K562 (cell line): ENCODE measurements at regions of chr6 and their contacts with region 1.

Region 1: DNA sequence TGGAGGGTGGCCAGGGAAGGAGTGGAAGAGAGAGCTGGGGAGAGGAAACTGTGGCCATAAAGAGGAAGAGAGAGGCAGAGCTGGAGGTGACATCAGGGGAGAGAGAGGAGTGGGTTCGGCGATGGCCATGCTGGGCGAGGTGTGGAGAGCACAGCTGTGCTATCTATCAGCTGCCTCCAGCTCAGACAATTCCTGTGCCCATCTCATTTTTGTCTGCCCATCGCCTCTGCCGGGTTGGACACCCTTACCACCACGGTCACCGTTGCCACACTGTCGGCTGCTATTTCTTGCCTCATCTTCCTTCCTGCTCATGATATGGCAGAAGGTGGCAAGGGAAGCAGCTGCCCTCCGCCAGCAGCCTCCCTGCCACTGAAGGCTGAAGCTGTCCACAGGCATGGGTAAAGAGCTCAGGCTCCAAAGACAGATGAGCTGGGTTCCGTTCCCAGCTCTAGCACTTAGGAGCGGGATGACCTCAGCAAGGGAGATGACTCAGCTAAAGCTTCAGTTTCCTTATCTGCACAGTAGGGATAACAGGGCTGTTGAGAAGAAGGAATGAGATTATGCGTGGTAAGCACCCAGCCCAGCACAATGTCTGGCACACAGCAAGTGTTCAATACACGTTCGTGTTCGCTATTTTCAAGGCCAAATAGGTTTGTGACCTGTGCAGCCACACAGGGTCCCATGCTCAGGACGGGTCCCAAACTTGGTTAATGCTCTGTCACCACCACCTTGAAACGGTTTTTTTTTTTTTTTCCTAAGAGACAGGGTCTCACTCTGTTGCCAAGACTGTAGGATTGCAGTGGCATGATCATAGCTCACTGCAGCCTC is 21.9 kb upstream of the TAF8 start:
- DNase-seq: peak; percentile 92 to 98 (median 94)
- ATAC-seq: peak; percentile 87
- H3K4me3 ChIP-seq: peak overlapping the region; percentile 29
- H3K27ac ChIP-seq: peak overlapping the region; percentile 98
- H3K4me1 ChIP-seq: peaks cover 69 to 77% of the 10 kb centered on the region in 2 experiments
- H3K27me3 ChIP-seq: no peaks in the 10 kb centered on the region
- CTCF ChIP-seq: no peak
- EP300 ChIP-seq: peak; percentile 96
- POLR2A ChIP-seq: peak; percentile 90
- RAD21 ChIP-seq: peak; percentile 6 to 37; a peak in 2 of 4 replicates

Region 2: DNA sequence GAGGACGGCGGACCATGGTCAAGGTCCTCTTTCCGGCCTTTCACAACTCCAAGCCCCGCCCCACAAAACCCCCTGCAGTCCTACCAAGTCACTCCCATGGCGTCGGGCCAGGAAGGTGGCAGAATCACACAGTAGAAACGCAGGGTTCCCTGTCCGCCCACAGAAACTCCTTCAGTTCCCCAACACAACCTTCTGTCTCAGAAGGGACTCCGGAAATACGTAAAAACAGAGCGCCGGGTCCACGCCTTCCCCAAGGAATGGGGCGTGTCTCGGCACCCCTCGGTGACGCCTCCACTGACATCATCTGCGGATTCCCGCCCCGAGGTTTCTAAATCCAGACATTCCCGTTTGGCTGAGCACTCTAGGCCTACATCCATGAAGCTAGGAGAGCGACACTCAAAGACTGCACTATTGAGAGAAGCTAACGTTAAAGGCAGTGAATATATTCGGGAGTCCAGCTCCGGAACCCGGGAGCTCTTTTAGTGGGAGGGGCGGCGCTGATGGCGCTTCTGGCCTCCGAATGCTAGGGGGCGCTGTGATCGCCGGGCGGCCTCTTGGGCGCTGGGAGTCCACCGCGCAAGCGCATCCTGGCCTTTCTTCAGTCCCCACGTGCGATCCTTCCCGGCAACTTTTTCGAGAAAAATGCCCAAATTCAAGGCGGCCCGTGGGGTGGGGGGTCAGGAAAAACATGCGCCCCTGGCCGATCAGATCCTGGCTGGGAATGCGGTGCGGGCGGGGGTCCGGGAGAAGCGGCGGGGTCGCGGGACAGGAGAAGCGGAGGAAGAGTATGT is 107.3 kb before region 1 on chr6 and contains the starts of genes BYSL and MED20:
- CTCF ChIA-PET with region 1: no interaction called
- POLR2A ChIA-PET with region 1: interaction called, 12 read pairs
- in situ Hi-C with region 1: no loop called
- intact Hi-C with region 1: no loop called
- DNase-seq: peak; percentile 95 to 98 (median 96)
- ATAC-seq: peak; percentile 89
- H3K4me3 ChIP-seq: peak within 1 kb of the TSS; percentile 82
- H3K27ac ChIP-seq: peak within 1 kb of the TSS; percentile 98
- H3K4me1 ChIP-seq: peaks cover 14 to 16% of the 10 kb centered on the region in 2 experiments; a peak in 4 of 5 replicates
- H3K27me3 ChIP-seq: no peaks in the 10 kb centered on the region
- CTCF ChIP-seq: peak; percentile 91 to 99 (median 98)
- EP300 ChIP-seq: peak; percentile 43; the same call in 1 of the 2 replicates
- POLR2A ChIP-seq: peak; percentile 88
- RAD21 ChIP-seq: peak in 1 of 2 experiments; percentile 20; a peak in 3 of 4 replicates
- polyA plus RNA-seq, gene BYSL: 22.2 to 25.8 TPM
- polyA plus RNA-seq, gene MED20: 63.8 to 80.9 TPM

Region 3: GRCh38 chr6:41941280-41942066 is 87.0 kb before region 1 on chr6 and contains the start of gene CCND3:
- CTCF ChIA-PET with region 1: interaction called, 3 read pairs
- POLR2A ChIA-PET with region 1: interaction called, 14 read pairs
- in situ Hi-C with region 1: no loop called
- intact Hi-C with region 1: loop called (anchors 2 kb)
- DNase-seq: peak; percentile 92 to 98 (median 94)
- ATAC-seq: peak; percentile 84
- H3K4me3 ChIP-seq: peak within 1 kb of the TSS; percentile 81
- H3K27ac ChIP-seq: peak within 1 kb of the TSS; percentile 72
- H3K4me1 ChIP-seq: peaks cover 40 to 55% of the 10 kb centered on the region in 2 experiments
- H3K27me3 ChIP-seq: no peaks in the 10 kb centered on the region
- CTCF ChIP-seq: peak in 2 of 3 experiments; percentile 6 to 12; a peak in 1 of 6 replicates
- EP300 ChIP-seq: 0 out of 2 replicates have a peak, but pooled peaks have one; percentile 8
- POLR2A ChIP-seq: peak; percentile 70
- RAD21 ChIP-seq: no peak
- polyA plus RNA-seq, gene CCND3: 21.5 to 24.7 TPM

Region 4: DNA sequence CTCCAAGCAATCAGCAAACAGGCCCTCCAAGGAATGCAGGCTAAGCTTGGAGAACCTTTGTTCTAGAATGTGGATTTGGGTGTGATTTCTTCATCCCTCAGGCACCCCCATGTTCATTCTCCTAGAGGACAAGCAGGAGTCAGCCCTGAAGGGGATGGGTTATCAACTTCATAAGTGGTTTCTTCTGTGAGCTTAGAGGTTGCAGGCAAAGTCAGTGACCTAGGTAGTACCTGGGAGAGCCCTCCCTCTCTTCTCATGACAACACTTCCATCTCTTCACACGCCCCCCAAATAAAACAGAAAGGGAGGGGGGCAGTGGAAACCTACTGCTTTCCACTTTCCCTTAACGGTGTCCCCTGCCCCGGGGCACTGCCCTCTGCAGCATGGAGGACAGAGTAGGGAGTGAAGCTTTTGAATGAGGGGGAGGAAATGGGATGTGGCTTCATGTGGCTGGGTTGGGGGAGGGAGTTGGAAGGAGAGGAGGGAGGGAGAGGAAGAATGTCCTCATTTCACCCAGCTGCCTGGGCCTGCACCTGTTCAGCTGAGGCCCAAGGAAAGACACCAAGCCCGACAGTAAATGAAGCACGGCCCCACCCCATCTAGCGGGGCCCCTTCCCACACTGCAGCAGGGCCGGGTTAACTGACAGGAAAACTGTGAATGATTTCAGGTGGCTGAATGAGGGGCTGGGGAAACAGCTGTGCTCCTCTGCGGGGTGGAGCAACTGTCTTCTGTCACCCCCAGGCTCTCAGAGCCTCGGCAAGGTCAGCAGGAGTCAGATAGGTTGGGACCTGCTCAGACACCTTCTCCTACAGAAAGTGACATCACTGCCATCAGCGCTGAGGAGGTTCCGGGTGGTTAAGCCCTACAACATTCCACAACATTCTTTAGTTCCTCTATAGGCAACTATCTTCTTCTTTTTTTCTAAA is 18.2 kb before region 1 on chr6:
- CTCF ChIA-PET with region 1: no interaction called
- POLR2A ChIA-PET with region 1: interaction called, 52 read pairs
- in situ Hi-C with region 1: no loop called
- intact Hi-C with region 1: no loop called
- DNase-seq: peak; percentile 74 to 79 (median 75)
- ATAC-seq: peak; percentile 90
- H3K4me3 ChIP-seq: no peak overlapping the region
- H3K27ac ChIP-seq: peak overlapping the region; percentile 15; the same call in 1 of the 3 replicates
- H3K4me1 ChIP-seq: peaks cover 18 to 43% of the 10 kb centered on the region in 2 experiments
- H3K27me3 ChIP-seq: no peaks in the 10 kb centered on the region
- CTCF ChIP-seq: peak in 1 of 3 experiments; percentile 19; a peak in 2 of 6 replicates
- EP300 ChIP-seq: peak; percentile 44; the same call in 1 of the 2 replicates
- POLR2A ChIP-seq: 0 out of 2 replicates have a peak, but pooled peaks have one; percentile 18
- RAD21 ChIP-seq: peak; percentile 18 to 34; a peak in 1 of 4 replicates

Region 5: DNA sequence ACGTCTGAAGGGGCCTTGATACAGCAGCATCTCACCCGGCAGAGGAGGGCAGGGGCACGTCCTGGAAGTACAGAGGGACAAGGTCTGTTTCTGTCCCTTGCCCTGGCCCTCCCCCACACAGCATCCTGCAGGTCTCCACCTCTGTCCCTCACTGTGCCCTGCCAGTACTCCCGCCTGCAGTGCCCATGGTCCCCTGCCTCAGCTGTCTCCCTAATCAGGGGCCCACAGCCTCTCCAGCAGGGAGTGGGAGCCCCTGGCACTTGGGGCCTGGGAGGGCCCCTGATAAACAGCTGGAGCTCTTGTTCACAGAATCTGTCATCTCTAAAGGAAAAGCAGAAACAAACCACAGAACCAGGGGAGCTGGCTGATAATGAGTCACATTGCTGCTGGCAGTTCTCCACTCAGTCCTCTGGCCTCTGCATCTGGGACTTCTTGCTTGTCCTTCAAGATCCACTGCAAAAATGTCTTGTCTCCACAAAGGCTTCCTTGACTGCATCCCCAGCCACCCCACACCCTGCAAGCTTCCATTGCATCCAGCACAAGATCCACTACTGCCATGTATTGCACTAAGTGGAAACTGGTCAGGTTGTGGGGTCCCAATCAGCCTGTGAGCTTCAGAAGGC is 11.3 kb before region 1 on chr6:
- CTCF ChIA-PET with region 1: no interaction called
- POLR2A ChIA-PET with region 1: interaction called, 52 read pairs
- in situ Hi-C with region 1: no loop called
- intact Hi-C with region 1: loop called (anchors 1 kb)
- DNase-seq: peak; percentile 59 to 98 (median 79)
- ATAC-seq: peak; percentile 91
- H3K4me3 ChIP-seq: no peak overlapping the region
- H3K27ac ChIP-seq: peak overlapping the region; percentile 63
- H3K4me1 ChIP-seq: peaks cover 24 to 34% of the 10 kb centered on the region in 2 experiments
- H3K27me3 ChIP-seq: no peaks in the 10 kb centered on the region
- CTCF ChIP-seq: no peak
- EP300 ChIP-seq: peak; percentile 95
- POLR2A ChIP-seq: no peak
- RAD21 ChIP-seq: peak; percentile 22 to 37; a peak in 3 of 4 replicates

Region 6: DNA sequence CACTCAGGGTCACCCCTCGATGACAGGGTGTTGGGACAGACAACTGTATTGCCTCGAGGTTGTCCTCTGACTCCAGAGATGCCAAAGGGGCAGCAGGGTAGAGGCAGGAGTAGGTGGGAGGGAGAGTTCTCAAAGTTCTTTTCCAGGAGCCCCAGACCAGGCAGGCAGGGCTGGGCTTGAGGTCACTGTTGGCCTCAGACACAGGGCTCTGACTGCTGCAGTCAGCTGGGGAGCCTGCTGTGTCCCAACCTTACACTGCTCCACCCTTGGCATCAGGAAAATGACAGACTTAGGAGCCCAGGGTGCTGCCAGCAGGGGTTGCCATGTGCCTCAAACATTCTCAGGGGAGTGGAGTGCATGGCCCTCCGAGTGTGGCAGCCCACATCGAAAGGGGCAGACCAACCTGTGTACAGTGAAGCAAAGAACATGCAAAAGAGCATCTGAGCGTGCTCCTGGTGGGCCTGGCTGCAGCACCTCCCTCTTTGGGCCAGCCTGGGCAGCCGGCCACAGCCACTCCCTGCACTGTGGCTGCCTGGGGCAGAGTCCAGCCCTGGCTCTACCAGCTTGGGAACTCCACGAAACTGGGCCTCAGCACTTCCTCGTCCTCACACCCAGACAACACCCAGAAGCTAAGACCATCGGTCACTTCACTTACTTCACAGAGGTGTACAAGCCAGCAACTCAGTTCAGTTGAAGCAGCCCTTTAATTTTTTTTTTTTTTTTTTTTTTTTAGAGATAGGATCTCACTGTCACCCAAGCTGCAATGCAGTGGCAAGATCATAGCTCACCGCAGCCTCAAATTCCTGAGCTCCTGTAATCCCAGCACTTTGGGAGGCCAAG is 89.9 kb after region 1 on chr6:
- CTCF ChIA-PET with region 1: no interaction called
- POLR2A ChIA-PET with region 1: no interaction called
- in situ Hi-C with region 1: no loop called
- intact Hi-C with region 1: no loop called
- DNase-seq: no peak
- ATAC-seq: peak; percentile 59
- H3K4me3 ChIP-seq: no peak overlapping the region
- H3K27ac ChIP-seq: no peak overlapping the region
- H3K4me1 ChIP-seq: peaks cover 0 to 11% of the 10 kb centered on the region in 2 experiments; a peak in 2 of 5 replicates
- H3K27me3 ChIP-seq: peaks cover 2 to 14% of the 10 kb centered on the region in 2 experiments; a peak in 3 of 5 replicates
- CTCF ChIP-seq: no peak
- EP300 ChIP-seq: no peak
- POLR2A ChIP-seq: no peak
- RAD21 ChIP-seq: no peak